Kidney (tissue), 22 donors: ENCODE measurements at regions of chr15 and their contacts with region 1.

Region 1: DNA sequence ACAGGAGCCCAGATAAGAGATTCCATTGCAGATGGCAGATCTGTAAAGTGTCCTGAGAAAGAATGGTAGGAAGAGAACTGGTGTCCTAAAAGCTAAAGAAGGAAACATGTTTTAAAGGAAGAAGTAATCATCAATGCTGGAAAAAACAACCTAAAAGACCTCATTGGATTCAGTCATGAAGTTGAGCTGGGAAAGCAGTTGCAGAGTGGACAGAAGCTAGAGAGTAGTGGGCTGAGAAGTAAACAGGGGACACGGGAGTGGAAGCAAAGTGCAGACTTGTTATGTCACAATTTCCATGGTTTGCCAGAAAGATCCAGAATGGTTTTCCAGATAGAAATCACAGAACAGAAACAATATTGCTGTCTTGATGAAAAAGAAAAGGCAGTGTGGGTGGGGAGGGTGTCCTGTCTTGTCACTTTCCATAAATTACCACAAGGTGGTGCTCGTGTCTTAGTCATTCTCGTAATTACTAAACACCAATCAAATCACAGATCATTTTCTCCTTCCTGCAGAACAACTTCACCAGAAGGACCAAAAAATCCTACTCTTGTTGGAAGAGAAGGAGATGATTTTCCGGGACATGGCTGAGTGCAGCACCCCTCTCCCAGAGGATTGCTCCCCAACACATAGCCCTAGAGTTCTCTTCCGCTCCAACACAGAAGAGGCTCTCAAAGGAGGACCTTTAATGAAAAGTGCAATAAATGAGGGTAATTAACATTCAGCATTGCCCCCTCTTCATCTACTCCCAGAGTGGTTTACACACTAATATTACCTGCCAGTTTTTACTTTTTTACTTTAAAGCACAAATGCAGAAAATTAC is 64.5 kb downstream of the KLHL25 start:
- DNase-seq: peak in 3 of 5 donors; percentile 44 to 82 (median 78)
- H3K4me3 ChIP-seq: no peak overlapping the region
- H3K27ac ChIP-seq: no peak overlapping the region
- H3K4me1 ChIP-seq: no peaks in the 10 kb centered on the region
- H3K27me3 ChIP-seq: no peaks in the 10 kb centered on the region
- CTCF ChIP-seq: peak; percentile 73

Region 2: GRCh38 chr15:85794603-85795336 is 64.6 kb after region 1 on chr15 and contains the start of gene KLHL25:
- intact Hi-C with region 1: no loop called
- DNase-seq: peak; percentile 97 to 98 (median 98)
- H3K4me3 ChIP-seq: peak within 1 kb of the TSS; percentile 71 to 87 (median 82)
- H3K27ac ChIP-seq: peak within 1 kb of the TSS; percentile 90 to 92
- H3K4me1 ChIP-seq: peaks cover 0 to 21% (median 12%) of the 10 kb centered on the region in 3 donors
- H3K27me3 ChIP-seq: no peaks in the 10 kb centered on the region
- CTCF ChIP-seq: no peak
- total RNA-seq, gene KLHL25: 8.4 TPM

Region 3: GRCh38 chr15:85831415-85832113 is 101.4 kb after region 1 on chr15:
- intact Hi-C with region 1: loop called (anchors 5 kb)
- DNase-seq: peak; percentile 65 to 86 (median 71)
- H3K4me3 ChIP-seq: no peak overlapping the region
- H3K27ac ChIP-seq: no peak overlapping the region
- H3K4me1 ChIP-seq: no peaks in the 10 kb centered on the region
- H3K27me3 ChIP-seq: no peaks in the 10 kb centered on the region
- CTCF ChIP-seq: peak; percentile 80